ENCODE measurements at regions of chr7 and their contacts with region 1.

Region 1: DNA sequence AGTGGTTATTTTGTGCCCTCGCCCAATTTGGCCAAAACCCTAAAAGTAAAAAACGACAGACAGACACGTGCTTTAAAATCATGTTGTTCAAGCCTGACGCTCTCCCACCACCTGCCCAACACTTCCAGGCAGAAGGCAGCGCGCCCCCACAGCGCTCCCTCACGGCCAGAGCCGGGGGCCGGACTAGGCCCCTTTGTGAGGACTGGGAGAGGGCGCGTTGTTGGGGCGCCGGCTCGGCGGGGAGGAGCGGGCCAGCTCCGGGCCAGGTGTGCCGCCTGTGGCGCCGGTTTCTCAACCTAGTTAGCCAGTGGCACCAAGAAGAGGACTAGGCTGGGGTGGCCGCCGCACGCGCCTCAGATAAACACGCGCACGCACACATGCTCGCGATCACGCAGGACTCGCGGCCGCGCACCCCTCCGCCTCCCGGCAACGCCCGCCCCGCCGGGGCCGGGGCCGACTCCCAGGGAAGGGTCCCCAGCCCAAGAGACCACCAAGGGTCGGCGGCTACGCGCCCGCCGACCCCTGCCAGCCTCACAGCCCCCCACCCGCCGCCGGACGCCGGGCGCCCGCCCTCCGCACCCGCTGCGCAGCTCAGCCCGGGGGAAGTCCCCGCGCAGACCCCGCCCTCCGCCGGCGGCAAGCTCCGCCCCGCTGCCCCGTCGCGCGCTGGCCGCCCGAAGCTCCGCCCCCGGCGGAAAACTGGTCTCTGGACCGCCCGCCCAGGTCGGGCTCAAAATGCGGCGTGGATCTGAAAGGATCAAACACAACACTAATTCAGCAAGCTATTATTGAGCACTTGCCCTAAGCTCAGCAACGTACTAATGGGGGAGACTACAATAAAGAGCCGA is at the start of gene IMMP2L:
- DNase-seq: peak; percentile 98
- ATAC-seq: peak; percentile 95
- H3K4me3 Mint-ChIP-seq: peak within 1 kb of the TSS; percentile 87
- H3K27ac Mint-ChIP-seq: peak within 1 kb of the TSS; percentile 88
- H3K4me1 Mint-ChIP-seq: peaks cover 32% of the 10 kb centered on the region
- H3K27me3 Mint-ChIP-seq: peaks cover 3% of the 10 kb centered on the region
- CTCF ChIP-seq: no peak
- total RNA-seq, gene IMMP2L: 28.5 and 31.9 TPM in 2 replicates

Region 2: GRCh38 chr7:111083413-111083812 is 478.7 kb before region 1 on chr7:
- CTCF ChIA-PET with region 1: no interaction called
- POLR2A ChIA-PET with region 1: no interaction called
- intact Hi-C with region 1: loop called (anchors 2 kb)
- DNase-seq: no peak
- ATAC-seq: peak; percentile 96
- H3K4me3 Mint-ChIP-seq: peak overlapping the region; percentile 59
- H3K27ac Mint-ChIP-seq: peak overlapping the region; percentile 90
- H3K4me1 Mint-ChIP-seq: peaks cover 48% of the 10 kb centered on the region
- H3K27me3 Mint-ChIP-seq: no peaks in the 10 kb centered on the region
- CTCF ChIP-seq: no peak

Region 3: GRCh38 chr7:111329367-111330234 is 232.5 kb before region 1 on chr7:
- CTCF ChIA-PET with region 1: no interaction called
- POLR2A ChIA-PET with region 1: no interaction called
- intact Hi-C with region 1: loop called (anchors 5 kb)
- DNase-seq: no peak
- ATAC-seq: no peak
- H3K4me3 Mint-ChIP-seq: no peak overlapping the region
- H3K27ac Mint-ChIP-seq: no peak overlapping the region
- H3K4me1 Mint-ChIP-seq: peaks cover 18% of the 10 kb centered on the region
- H3K27me3 Mint-ChIP-seq: no peaks in the 10 kb centered on the region
- CTCF ChIP-seq: no peak

Region 4: DNA sequence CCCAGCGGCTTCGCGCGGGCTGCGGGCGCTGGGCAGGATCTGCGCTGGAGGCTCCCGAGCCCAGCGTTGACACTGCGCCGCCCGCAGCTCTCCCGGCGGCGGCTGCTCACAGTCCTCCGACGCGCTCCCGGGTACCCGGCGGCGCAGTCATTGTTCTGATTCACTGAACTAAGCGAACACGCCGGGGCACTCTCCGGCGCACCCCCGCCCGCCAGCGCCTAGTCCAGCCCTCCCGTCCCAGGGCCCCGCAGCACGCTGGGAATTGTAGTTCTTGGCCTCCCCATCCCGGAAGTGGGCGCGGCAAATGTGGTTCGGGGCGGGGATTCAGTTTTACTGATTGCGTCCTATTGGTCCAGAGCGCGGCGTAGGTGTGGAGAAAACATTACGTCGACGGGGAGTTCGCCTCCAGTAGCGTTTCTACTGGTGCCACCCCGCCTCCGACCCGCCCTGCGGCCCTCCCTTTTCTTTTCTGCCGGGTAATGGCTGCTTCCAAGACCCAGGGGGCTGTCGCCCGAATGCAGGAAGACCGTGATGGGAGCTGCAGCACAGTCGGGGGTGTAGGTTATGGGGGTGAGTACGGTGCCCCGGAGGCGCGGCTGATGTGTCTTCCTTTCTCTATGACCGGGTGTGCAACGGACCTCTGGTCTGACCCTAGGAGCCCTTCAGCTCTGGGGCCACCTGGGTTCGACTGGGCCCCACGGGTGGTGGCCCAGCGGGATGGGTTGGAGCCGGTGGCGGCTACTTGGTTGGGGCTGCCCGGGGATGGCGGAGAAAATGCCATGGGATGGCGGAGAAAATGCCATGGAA is 644.3 kb after region 1 on chr7 and contains the starts of genes DOCK4 and ZNF277:
- CTCF ChIA-PET with region 1: no interaction called
- POLR2A ChIA-PET with region 1: no interaction called
- intact Hi-C with region 1: loop called (anchors 1 kb)
- DNase-seq: peak; percentile 99
- ATAC-seq: peak; percentile 90
- H3K4me3 Mint-ChIP-seq: peak within 1 kb of the TSS; percentile 97
- H3K27ac Mint-ChIP-seq: peak within 1 kb of the TSS; percentile 83
- H3K4me1 Mint-ChIP-seq: peaks cover 37% of the 10 kb centered on the region
- H3K27me3 Mint-ChIP-seq: peaks cover 25% of the 10 kb centered on the region
- CTCF ChIP-seq: no peak
- total RNA-seq, gene DOCK4: 0.61 and 0.73 TPM in 2 replicates
- total RNA-seq, gene ZNF277: 12.6 and 13.1 TPM in 2 replicates

Region 5: GRCh38 chr7:112449902-112450806 is 888.0 kb after region 1 on chr7 and contains the start of gene IFRD1:
- CTCF ChIA-PET with region 1: no interaction called
- POLR2A ChIA-PET with region 1: interaction called, 22 read pairs
- intact Hi-C with region 1: loop called (anchors 1 kb)
- DNase-seq: peak; percentile 99
- ATAC-seq: peak; percentile 81
- H3K4me3 Mint-ChIP-seq: peak within 1 kb of the TSS; percentile 99
- H3K27ac Mint-ChIP-seq: peak within 1 kb of the TSS; percentile 99
- H3K4me1 Mint-ChIP-seq: peaks cover 36% of the 10 kb centered on the region
- H3K27me3 Mint-ChIP-seq: no peaks in the 10 kb centered on the region
- CTCF ChIP-seq: no peak
- total RNA-seq, gene IFRD1: 58.7 and 67.0 TPM in 2 replicates

Region 6: GRCh38 chr7:113118074-113118959 is 1556.2 kb after region 1 on chr7 and contains the start of gene SMIM30:
- CTCF ChIA-PET with region 1: no interaction called
- POLR2A ChIA-PET with region 1: no interaction called
- intact Hi-C with region 1: loop called (anchors 1 kb)
- DNase-seq: peak; percentile 77
- ATAC-seq: peak; percentile 100
- H3K4me3 Mint-ChIP-seq: peak within 1 kb of the TSS; percentile 93
- H3K27ac Mint-ChIP-seq: peak within 1 kb of the TSS; percentile 97
- H3K4me1 Mint-ChIP-seq: peaks cover 23% of the 10 kb centered on the region
- H3K27me3 Mint-ChIP-seq: no peaks in the 10 kb centered on the region
- CTCF ChIP-seq: no peak
- total RNA-seq, gene SMIM30: 28.7 and 30.6 TPM in 2 replicates